Heart right ventricle (tissue), 16 donors: ENCODE measurements at regions of chr2 and their contacts with region 1.

Region 1: DNA sequence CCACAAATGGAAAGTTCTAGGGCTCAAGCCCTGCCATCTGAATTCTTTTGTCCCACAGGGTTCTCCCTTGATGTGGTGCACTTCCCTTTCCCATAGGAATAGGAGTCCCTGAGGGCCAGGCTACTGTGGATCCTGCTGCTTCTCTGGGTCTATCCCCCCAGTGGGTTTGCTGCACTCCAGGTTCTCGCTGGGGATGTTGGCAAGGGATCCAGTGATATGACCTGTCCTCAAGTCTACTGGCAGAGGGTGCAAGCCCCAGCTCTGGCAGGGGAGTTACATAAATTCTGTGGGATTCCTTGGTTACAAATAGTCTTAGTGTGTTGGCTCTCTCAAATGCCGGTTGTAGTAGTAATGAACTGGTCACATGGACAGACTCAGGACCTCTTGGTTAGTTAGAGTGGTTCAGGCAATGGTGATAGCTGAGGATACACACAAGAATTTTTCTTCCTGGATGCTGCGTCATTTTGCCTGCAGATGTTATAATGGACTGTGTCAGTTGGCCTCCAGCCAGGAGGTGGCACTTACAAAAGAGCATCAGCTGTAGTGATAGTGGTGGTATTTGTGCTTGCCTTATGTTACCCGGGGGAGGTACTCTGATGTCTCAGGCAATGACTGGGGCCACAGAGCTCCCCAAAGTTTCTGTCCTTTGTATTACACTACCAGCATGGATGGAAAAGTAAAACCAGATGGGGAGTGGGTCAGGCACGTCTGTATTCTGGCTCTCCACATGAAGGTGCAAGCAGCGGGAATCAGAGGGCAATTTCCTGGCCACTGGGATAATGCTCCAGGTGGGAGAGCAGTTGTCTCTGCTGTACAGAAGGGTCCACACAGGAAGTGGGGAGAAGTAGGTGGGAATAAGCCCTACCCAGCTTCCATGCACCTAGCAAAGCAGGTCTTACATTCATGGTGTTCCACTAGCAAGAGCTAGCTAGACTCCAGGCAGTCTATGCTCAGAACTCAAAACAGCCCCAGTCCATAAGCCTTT is 267.9 kb downstream of the SOX11 start:
- DNase-seq: no peak
- ATAC-seq: peak in 3 of 8 donors; percentile 19 to 74 (median 46)
- H3K4me3 ChIP-seq: no peak overlapping the region
- H3K27ac ChIP-seq: no peak overlapping the region
- H3K4me1 ChIP-seq: no peaks in the 10 kb centered on the region
- H3K27me3 ChIP-seq: no peaks in the 10 kb centered on the region
- CTCF ChIP-seq: no peak

Region 2: GRCh38 chr2:6186332-6187151 is 226.4 kb after region 1 on chr2:
- intact Hi-C with region 1: loop called in 1 of 10 experiments (anchors 5 kb)
- DNase-seq: peak in 1 of 2 donors; percentile 48
- ATAC-seq: peak; percentile 71 to 98 (median 91)
- H3K4me3 ChIP-seq: no peak overlapping the region
- H3K27ac ChIP-seq: peak overlapping the region in 5 of 10 donors; percentile 23 to 52 (median 49)
- H3K4me1 ChIP-seq: peaks cover 0 to 22% (median 4%) of the 10 kb centered on the region in 9 donors
- H3K27me3 ChIP-seq: peaks cover 0 to 2% (median 0%) of the 10 kb centered on the region in 7 donors
- CTCF ChIP-seq: no peak